Sciatic nerve (tissue), 2 donors: ENCODE measurements at regions of chr11 and their contacts with region 1.

Region 1: GRCh38 chr11:65569973-65570918 is at the start of gene ZNRD2:
- DNase-seq: peak; percentile 98
- ATAC-seq: peak; percentile 92
- total RNA-seq, gene ZNRD2: 23.7 TPM

Region 2: GRCh38 chr11:65546217-65546958 is 23.9 kb before region 1 on chr11:
- intact Hi-C with region 1: no loop called
- DNase-seq: peak; percentile 89
- ATAC-seq: peak; percentile 52

Region 3: GRCh38 chr11:65606876-65607613 is 36.8 kb after region 1 on chr11:
- intact Hi-C with region 1: loop called (anchors 5 kb)
- DNase-seq: peak; percentile 95
- ATAC-seq: peak; percentile 96

Region 4: DNA sequence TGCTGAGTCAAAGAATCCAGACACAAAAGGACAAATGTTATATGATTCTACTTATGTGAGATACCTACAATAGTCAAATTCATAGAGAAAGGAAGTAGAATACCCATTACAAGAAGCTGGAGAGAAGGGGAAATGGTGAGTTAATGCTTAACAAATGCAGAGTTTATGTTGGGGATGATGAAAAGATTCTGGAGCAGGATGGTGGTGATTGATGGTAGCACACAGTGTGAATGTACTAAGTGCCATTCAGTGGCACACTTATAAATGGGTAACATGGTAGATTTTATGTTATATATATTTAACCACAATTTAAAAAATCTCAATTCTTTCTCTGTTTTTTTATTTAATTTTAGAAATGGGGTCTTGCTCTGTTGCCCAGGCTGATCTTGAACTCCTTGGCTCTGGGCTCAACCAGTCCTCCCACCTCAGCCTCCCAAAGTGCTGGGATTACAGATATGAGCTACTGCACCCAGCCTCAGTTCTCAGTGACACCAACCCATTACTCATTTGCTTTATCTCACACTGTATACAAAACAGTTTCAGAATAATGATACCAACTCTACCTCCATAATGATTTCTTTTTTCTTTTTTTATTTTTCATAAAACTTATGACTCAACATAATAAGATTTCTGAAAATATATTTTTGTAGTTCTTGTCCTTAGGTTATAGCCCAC is 102.1 kb after region 1 on chr11:
- intact Hi-C with region 1: no loop called
- DNase-seq: no peak
- ATAC-seq: no peak